Ascending aorta (tissue), 2 donors: ENCODE measurements at regions of chr20 and their contacts with region 1.

Region 1: GRCh38 chr20:47272893-47273590 is 83.5 kb downstream of the ZMYND8 start:
- DNase-seq: peak in 1 of 2 donors; percentile 77
- H3K4me3 ChIP-seq: no peak overlapping the region
- H3K27ac ChIP-seq: peak overlapping the region; percentile 95 to 97
- H3K4me1 ChIP-seq: peaks cover 15 to 62% of the 10 kb centered on the region in 2 donors
- H3K27me3 ChIP-seq: no peaks in the 10 kb centered on the region
- CTCF ChIP-seq: peak; percentile 79 to 94 (median 89)

Region 2: DNA sequence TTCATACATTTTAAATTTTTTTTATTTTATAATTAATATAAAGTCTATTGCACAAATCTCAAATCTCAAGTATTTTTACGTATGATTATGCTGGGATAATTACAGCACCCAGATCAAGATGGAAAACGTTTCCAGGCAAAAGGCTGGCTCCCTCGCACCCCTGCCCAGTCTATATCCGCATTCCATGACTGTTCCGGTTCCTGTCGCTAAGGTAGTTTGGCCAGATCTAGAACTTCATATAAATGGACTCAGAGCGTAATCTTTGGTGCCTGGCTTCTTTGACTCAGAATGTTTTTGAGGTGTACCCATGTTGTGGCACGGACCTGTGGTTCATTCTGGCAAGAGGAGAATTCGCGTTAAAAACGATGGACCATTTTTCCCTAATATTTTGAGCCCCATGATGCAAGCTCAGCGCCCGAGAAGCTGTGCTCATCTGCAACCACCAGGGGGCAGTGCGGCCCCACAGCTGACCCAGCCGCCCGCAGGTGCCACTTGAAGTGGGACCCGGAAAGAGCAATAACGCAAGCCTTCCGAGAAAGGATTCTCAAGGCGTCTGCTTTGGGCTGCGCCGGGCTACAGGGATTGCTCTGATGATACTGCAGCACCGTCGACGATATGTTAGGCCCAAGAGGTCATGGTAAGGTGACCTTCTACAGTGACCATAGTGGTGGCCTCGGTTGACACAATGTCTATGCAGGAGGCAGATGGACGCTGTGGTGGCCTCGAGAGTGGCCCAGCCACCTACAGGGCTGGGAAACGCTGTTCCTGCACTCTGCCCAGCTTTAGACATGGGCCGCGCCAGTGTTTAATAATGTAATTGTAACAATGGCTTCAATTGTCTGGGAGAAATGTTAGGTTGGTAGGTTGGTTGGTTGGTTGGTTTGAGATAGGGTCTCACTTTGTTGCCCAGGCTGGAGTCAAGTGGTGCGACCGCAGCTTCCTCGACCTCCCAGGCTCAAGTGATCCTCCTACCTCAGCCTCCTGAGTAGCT is 76.7 kb before region 1 on chr20:
- intact Hi-C with region 1: loop called (anchors 5 kb)
- DNase-seq: peak; percentile 14 to 81
- H3K4me3 ChIP-seq: peak overlapping the region in 1 of 2 donors; percentile 33
- H3K27ac ChIP-seq: no peak overlapping the region
- H3K4me1 ChIP-seq: peaks cover 0 to 5% of the 10 kb centered on the region in 2 donors
- H3K27me3 ChIP-seq: no peaks in the 10 kb centered on the region
- CTCF ChIP-seq: peak; percentile 95 to 98 (median 96)

Region 3: GRCh38 chr20:47357296-47358035 is 84.4 kb after region 1 on chr20:
- intact Hi-C with region 1: loop called (anchors 1 kb)
- DNase-seq: peak; percentile 19 to 89
- H3K4me3 ChIP-seq: peak overlapping the region in 1 of 2 donors; percentile 8
- H3K27ac ChIP-seq: peak overlapping the region; percentile 95 to 99
- H3K4me1 ChIP-seq: peaks cover 51 to 91% of the 10 kb centered on the region in 2 donors
- H3K27me3 ChIP-seq: no peaks in the 10 kb centered on the region
- CTCF ChIP-seq: no peak

Region 4: DNA sequence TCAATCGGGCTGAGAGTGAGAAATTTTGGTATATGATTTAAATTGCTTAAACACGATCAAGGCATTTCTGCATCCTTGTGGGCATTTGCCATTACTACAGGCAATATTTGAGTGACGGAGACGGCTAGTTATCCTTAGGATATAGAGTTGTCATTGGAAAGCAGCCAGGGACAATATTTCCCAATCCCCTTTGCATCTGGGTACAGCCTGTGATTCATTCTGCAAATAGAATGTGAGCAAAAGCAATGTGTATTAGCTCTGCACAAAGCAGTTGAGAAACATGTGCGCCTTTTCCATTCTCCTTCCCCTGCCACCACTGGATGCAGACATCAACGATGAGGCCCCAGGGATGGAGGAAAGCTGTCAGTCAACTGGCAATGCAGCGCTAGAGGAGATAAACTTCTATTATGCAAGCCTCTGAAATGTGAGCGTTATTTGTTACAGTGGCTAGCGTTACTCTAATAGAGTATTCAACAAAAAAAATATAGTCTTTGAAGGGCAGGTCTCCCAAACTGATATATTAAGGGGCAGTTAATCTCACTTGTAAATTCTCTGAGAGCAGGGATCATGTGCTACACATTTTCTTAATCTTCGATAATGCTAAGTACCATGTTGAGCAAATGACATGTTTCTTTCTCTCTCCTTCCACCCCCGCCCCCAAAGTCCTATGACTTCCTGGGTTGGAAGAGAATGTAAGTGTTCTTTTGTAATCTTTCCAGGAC is 191.5 kb after region 1 on chr20:
- intact Hi-C with region 1: loop called (anchors 1 kb)
- DNase-seq: peak; percentile 33 to 93
- H3K4me3 ChIP-seq: no peak overlapping the region
- H3K27ac ChIP-seq: peak overlapping the region; percentile 90 to 92
- H3K4me1 ChIP-seq: peaks cover 3 to 26% of the 10 kb centered on the region in 2 donors
- H3K27me3 ChIP-seq: no peaks in the 10 kb centered on the region
- CTCF ChIP-seq: peak; percentile 56 to 63 (median 61)

Region 5: GRCh38 chr20:47620808-47621805 is 348.1 kb after region 1 on chr20:
- intact Hi-C with region 1: loop called (anchors 2 kb)
- DNase-seq: no peak
- H3K4me3 ChIP-seq: no peak overlapping the region
- H3K27ac ChIP-seq: no peak overlapping the region
- H3K4me1 ChIP-seq: no peaks in the 10 kb centered on the region
- H3K27me3 ChIP-seq: no peaks in the 10 kb centered on the region
- CTCF ChIP-seq: peak; percentile 64 to 87 (median 81)